Dorsolateral prefrontal cortex (tissue), 120 donors: ENCODE measurements at regions of chr11 and their contacts with region 1.

Region 1: DNA sequence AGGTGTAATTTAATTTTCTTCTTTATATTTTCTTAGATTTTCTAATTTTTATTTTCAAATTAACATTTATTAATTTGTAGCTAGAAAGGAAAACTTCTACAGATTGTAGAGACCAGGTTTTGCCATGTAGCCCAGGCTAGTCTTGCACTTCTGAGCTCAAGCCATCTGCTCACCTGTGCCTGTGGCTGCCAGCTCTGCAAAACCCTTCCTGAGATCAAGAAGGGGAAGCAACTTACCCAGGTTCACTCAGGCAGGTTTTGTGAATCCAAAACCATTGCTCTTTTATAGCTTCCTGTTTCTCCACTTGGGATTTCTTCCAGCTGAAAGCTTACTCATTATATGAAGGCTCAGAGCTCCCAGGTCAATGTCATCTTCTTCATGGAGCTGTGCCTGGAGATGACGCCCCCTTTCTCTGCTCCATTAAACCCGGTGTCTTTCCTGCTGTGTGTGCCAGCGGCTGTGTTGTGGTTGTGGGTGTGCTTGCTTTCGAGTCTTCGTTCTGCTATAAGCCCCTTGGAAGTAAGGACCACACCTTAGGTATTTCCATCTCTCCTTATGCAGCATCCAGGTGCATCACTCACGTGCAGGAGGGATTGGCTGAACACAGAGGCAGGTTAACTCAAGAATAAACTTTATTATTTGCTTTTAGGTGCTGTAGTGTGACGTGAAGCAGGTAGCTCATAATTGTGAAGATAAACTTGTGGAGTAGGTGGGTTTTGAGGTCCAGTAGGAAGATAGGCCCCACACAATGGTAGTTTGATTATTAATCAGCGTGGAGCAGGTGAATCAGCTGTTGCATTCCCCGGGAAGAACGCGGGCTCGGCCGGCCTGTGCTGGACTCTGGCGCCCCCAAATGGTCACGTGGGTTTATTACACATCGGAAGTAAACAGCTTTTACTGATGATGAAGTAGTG is 42.2 kb upstream of the INCENP start:
- DNase-seq: peak; percentile 78 to 92 (median 86)
- H3K4me3 ChIP-seq: peak overlapping the region in 52 of 59 donors; percentile 1 to 59 (median 40)
- H3K27ac ChIP-seq: peak overlapping the region in 25 of 59 donors; percentile 12 to 78 (median 38)
- H3K27me3 ChIP-seq: no peaks in the 10 kb centered on the region
- CTCF ChIP-seq: peak; percentile 76 to 100 (median 95)

Region 2: DNA sequence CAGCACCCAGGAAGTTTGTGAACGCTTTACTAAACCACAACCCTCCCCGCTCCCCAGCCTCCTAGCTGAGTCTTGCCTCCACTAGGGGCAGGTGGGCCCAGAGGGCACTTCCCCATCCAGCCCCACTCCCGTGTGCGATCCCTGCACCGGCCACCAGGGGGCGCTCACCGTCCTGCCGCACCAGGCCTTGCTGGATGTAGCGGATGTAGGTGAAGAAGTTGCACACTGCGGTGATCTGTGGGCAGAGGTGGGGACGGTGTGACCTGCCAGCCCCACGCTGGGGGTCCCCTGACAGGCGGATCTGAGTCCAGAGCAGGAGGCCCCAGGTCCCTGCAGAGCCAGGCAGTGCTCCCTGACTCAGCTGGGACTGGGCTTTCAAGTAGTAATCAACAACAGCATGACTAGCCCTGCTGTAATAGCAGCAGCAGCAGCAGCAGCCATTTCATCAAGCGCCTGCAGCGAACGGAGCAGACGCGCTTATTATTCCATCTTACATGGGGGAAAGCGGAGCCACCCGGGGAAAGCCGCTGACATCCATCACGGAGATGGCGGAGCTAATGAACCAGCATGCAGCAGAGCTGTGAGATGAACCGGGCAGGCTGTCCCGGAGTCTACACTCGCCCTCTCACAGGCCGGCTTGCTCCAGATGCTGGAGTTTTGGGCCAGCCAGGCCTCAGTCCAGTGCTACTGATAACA is 182.3 kb before region 1 on chr11:
- intact Hi-C with region 1: loop called (anchors 1 to 2 kb)
- DNase-seq: peak; percentile 53 to 85 (median 72)
- H3K4me3 ChIP-seq: no peak overlapping the region
- H3K27ac ChIP-seq: peak overlapping the region in 50 of 59 donors; percentile 1 to 84 (median 56)
- H3K27me3 ChIP-seq: no peaks in the 10 kb centered on the region
- CTCF ChIP-seq: peak; percentile 99 to 100 (median 100)